ENCODE measurements at regions of chr5 and their contacts with region 1.

Region 1: GRCh38 chr5:17189381-17190036 is 27.9 kb upstream of the BASP1 start:
- DNase-seq: peak; percentile 82 to 89 (median 84)
- H3K4me3 ChIP-seq: no peak overlapping the region
- H3K27ac ChIP-seq: no peak overlapping the region
- H3K4me1 ChIP-seq: peaks cover 0 to 7% (median 2%) of the 10 kb centered on the region in 4 experiments
- H3K27me3 ChIP-seq: peaks cover 0 to 4% (median 0%) of the 10 kb centered on the region in 5 experiments

Region 2: GRCh38 chr5:16784843-16785791 is 404.4 kb before region 1 on chr5:
- CTCF ChIA-PET with region 1: interaction called, 15 read pairs
- POLR2A ChIA-PET with region 1: no interaction called
- DNase-seq: no peak
- H3K4me3 ChIP-seq: no peak overlapping the region
- H3K27ac ChIP-seq: no peak overlapping the region
- H3K4me1 ChIP-seq: no peaks in the 10 kb centered on the region
- H3K27me3 ChIP-seq: no peaks in the 10 kb centered on the region

Region 3: GRCh38 chr5:16791036-16791705 is 398.3 kb before region 1 on chr5:
- CTCF ChIA-PET with region 1: interaction called, 47 read pairs
- POLR2A ChIA-PET with region 1: no interaction called
- DNase-seq: peak; percentile 64 to 76 (median 71)
- H3K4me3 ChIP-seq: no peak overlapping the region
- H3K27ac ChIP-seq: no peak overlapping the region
- H3K4me1 ChIP-seq: peaks cover 0 to 3% (median 0%) of the 10 kb centered on the region in 4 experiments
- H3K27me3 ChIP-seq: no peaks in the 10 kb centered on the region

Region 4: DNA sequence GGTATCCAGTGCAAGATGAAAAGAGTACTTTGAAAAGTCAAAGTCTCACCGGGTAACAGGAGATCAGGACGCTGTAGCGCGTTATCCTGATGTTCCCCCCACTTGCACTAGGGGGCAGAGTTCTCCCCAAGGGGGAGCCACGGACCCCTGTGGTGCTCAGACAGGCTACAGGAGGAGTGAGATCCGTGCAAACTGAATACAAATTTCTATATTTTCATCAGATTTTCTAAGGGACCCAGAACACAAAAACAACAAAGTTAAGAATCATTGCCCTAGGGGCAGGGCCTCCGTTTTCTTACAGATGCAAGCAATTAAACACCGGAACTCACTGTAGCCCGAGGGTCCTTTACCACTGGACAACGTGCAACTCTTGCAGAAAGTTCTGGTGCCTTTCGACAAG is 255.4 kb before region 1 on chr5:
- CTCF ChIA-PET with region 1: interaction called, 45 read pairs
- POLR2A ChIA-PET with region 1: no interaction called
- DNase-seq: peak; percentile 70 to 84 (median 79)
- H3K4me3 ChIP-seq: no peak overlapping the region
- H3K27ac ChIP-seq: no peak overlapping the region
- H3K4me1 ChIP-seq: peaks cover 4 to 21% (median 19%) of the 10 kb centered on the region in 4 experiments
- H3K27me3 ChIP-seq: peaks cover 4 to 79% (median 56%) of the 10 kb centered on the region in 5 experiments

Region 5: DNA sequence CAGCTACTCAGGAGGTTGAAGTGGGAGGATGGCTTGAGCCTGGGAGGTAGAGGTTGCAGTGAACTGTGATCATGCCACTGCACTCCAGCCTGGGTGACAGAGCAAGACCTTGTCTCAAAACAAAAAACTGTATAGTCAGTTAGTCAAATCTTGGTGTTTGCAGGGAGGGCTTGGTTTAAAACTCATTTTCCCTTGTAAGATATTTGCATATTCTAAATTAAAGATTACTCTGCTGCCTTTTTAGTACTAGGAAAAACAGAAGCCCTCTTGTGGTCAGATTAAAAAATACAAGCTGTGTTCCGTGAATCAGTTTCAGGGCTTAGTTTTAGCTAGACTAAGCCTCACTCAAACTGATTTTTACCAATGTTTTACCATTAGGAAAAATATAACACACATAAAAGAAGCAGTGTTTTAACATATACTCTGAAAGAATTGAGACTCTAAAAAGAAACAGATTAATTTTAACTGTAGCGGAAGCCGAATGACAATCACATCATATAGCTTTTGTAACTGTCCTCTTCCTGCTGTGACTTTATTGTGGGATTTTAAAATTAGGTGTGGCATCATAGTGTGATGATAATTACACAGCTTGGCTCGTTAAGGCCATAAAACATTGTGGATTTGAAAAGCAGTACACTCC is 56.9 kb before region 1 on chr5:
- CTCF ChIA-PET with region 1: interaction called, 43 read pairs
- POLR2A ChIA-PET with region 1: no interaction called
- DNase-seq: peak; percentile 31 to 58 (median 45)
- H3K4me3 ChIP-seq: no peak overlapping the region
- H3K27ac ChIP-seq: no peak overlapping the region
- H3K4me1 ChIP-seq: peaks cover 4 to 19% (median 13%) of the 10 kb centered on the region in 4 experiments
- H3K27me3 ChIP-seq: peaks cover 0 to 25% (median 10%) of the 10 kb centered on the region in 5 experiments

Region 6: DNA sequence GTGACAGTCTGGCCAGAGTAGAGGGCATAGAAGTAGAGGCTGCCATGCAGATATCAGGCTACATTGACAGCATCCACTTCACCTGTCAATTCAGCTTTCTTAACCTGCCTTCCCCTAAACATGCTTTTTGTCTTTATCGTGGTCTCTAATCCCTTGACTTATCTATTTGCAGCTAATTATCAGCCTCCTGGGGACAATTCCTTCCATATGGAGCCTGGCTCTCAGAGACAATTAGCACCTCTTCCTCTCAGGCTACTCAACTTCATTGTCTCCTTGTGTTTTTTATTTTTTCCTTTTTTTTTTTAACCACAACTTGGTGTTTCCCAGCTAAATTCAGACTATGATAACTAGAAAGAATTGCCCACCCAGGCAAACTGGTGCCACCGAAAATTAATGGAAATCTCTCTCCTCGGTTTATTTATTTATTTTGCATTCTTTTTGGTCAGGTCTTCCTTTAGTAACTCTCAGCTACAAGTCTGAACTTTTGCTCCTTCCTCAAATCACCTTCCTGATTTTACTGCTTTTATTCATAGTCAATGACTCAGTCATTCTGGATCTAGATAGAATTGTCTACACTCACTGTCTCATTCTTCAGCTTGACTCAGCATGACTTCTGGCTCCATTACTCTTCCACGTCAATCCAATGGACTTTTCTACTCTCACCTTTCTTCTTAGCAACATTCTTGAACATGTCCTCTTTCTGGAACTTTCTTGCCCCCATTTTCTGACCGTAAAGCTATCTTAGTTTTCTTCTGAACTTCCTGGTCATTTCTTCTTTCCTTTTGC is 35.1 kb before region 1 on chr5:
- CTCF ChIA-PET with region 1: interaction called, 11 read pairs
- POLR2A ChIA-PET with region 1: no interaction called
- DNase-seq: peak in 2 of 3 donors; percentile 12 to 27
- H3K4me3 ChIP-seq: no peak overlapping the region
- H3K27ac ChIP-seq: no peak overlapping the region
- H3K4me1 ChIP-seq: peaks cover 0 to 4% (median 0%) of the 10 kb centered on the region in 4 experiments
- H3K27me3 ChIP-seq: peaks cover 0 to 3% (median 0%) of the 10 kb centered on the region in 5 experiments

Region 7: DNA sequence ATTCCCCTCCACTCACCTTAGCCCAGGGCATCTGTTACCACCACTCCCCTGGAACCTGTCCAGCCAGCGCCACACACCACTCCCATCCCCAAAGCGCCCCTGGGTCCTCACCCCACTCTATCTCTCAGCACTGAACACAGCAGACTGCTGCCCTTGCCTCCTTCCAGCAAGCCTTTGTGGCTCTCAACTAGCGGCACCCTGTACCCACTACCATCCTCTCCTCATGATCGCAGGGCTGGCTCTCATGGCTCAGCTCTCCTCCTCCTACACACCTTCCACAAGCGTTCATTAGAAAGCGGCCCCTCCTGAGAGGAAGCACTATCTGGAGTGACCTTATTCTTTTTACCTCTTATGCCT is 14.6 kb after region 1 on chr5:
- CTCF ChIA-PET with region 1: interaction called, 26 read pairs
- POLR2A ChIA-PET with region 1: no interaction called
- DNase-seq: no peak
- H3K4me3 ChIP-seq: no peak overlapping the region
- H3K27ac ChIP-seq: no peak overlapping the region
- H3K4me1 ChIP-seq: no peaks in the 10 kb centered on the region
- H3K27me3 ChIP-seq: peaks cover 0 to 3% (median 1%) of the 10 kb centered on the region in 5 experiments

Region 8: DNA sequence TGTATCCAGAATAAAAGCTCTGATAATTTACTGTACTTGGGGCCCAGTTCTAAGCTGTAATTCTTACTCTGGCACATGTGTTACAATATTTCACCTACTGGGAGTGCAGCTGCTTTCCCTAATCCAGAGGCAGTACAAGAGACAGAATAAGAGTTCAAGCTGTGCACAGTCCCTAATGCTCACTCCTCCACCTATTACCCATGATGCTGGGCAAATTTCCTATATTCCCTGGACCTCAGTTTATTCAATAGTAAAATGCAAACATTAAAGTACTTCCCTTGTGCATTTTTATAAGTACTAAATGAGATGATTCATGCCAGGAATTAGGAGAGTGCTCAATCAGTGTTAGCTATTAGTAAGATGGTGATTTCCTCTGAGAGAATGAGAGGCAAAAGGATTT is 280.6 kb after region 1 on chr5:
- CTCF ChIA-PET with region 1: no interaction called
- POLR2A ChIA-PET with region 1: no interaction called
- DNase-seq: no peak
- H3K4me3 ChIP-seq: no peak overlapping the region
- H3K27ac ChIP-seq: no peak overlapping the region
- H3K4me1 ChIP-seq: no peaks in the 10 kb centered on the region
- H3K27me3 ChIP-seq: no peaks in the 10 kb centered on the region